OCI-LY7 (cell line): ENCODE measurements at regions of chr6 and their contacts with region 1.

Region 1: DNA sequence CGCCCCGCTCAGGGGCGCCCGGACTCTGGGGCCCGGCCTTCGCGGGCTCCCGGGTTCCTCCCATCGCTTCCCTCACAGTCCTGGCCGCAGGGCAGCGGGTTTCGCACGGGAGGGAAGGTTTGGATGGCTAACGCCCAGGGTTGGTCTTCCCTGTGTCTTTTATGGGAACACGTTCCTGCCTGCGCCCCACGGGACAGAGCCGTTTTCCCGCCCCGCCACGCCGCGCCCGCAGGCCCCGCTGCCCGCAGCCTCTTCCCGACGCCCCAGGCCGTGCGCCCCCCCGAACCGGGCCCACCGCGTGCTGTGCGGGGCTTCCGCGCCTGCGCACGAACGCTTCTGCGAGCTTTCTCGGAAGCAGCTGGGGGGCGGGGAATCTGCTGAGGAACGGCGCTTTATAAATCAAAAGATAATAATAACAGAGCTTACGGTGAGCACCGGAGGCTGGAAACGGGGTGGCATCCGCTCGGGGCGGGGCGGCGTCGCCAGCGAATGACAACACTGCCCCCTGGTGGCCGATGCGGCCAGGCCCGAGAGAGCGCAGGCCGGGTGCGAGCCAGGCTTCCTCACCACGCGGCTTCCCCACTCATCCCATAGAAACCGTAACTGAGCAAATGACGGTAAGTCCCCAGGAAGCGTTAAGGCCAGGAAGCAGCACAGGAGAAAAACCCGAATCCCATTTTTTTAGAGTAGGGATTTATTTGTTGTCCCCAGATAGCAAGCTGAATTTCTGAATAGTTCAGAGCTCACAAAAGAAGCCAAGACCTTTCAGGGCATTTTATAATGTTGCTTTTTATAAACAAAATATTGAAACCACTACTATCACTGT is 116.4 kb downstream of the MYLK4 start:
- DNase-seq: peak; percentile 43
- H3K4me3 ChIP-seq: no peak overlapping the region
- H3K27ac ChIP-seq: no peak overlapping the region
- H3K4me1 ChIP-seq: no peaks in the 10 kb centered on the region
- CTCF ChIP-seq: peak; percentile 93

Region 2: DNA sequence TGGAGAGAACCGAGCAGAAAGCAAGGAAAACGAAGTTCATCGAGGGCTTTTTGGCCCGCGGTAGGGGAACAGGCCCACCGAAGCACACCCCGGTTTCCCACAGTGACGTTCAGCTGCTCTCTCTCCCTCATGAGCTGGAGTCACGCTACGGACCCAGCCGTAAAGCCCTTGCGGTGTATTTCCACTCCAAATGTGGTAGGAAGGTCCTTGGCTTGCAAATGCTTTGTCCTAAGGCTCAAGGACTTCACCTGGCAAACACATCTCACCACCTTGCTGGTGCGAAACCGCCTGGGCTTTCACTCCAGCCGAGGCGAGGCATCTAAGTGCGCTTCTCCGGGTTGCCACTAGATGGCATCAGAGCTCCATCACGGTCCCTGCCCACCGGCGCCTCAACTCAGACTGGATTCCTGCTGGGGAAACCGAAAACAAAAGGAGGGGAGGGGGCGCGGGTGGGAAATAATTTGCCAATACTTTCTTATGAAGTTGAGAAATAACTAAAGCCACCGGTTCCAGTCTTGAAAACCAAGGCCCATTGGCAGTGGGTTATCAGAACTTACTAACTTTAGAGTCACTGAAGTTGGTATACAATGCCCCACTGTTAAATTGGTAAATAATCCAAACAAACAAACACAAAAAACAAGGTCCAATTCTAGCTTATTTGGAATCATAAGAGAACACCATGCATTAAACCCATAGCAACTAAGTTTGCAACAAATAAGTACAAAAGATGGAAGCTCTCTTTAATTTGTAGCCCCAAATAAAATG is 1038.1 kb before region 1 on chr6:
- CTCF ChIA-PET with region 1: no interaction called
- POLR2A ChIA-PET with region 1: interaction called, 4 read pairs
- intact Hi-C with region 1: loop called (anchors 5 kb)
- DNase-seq: peak; percentile 54
- H3K4me3 ChIP-seq: no peak overlapping the region
- H3K27ac ChIP-seq: no peak overlapping the region
- H3K4me1 ChIP-seq: no peaks in the 10 kb centered on the region
- CTCF ChIP-seq: peak; percentile 93